ENCODE measurements at regions of chr19 and their contacts with region 1.

Region 1: DNA sequence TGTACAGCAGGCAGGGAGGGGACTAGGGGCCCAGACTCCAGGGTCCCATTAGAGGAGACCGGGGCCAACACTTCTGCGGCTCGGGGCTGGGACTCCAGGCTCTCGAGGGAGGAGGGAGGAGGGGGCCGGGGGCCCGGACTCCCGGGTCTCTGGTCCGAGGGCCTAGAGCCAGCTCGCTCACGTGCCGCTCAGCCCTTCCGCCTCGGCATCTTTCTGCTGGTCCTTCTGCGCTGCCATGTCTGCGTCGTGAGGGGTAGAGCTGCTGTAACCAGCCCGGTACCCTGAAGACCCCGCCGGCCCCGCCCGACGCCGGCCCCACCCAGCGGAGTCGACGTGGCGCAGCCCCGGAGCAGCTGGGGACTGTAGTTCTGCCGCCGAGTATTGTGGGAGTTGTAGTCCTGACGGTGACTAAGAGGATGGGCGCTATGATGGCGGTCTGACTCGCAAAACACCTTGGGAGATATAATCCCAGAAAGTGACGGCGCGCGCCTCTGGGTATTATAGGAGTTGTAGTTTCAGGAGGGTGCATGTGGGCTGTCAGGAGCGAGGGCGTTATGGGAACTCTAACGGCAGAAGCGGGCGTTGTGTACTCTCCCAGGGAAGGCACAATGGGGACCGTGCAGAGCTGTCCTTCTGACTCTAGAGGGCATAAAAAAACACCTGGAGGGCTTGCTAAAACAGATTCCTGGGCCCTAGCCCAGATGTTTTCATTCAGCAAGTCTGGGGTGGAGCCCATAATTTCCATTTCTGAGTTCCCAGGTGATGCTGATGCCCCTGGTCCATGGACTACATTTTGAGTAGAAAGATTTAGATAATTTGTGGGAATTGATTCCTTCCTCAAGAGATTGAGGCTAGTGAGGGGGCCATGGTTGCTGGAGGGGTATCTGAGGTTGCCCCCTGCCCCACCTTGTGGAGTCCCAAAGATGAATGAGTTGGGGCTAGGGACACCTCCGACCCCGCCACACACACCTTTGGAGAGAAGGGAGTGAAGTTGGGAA is at the start of gene RABAC1:
- DNase-seq: peak; percentile 85
- ATAC-seq: peak; percentile 79
- H3K4me3 ChIP-seq: peak within 1 kb of the TSS; percentile 82 to 87
- H3K27ac ChIP-seq: peak within 1 kb of the TSS; percentile 72
- H3K4me1 ChIP-seq: peaks cover 24 to 38% of the 10 kb centered on the region in 2 experiments
- H3K27me3 ChIP-seq: no peaks in the 10 kb centered on the region
- CTCF ChIP-seq: peak in 2 of 3 experiments; percentile 34 to 37; a peak in 2 of 6 replicates
- POLR2A ChIP-seq: peak; percentile 37
- RAD21 ChIP-seq: no peak
- total RNA-seq, gene RABAC1: 66.3 TPM

Region 2: DNA sequence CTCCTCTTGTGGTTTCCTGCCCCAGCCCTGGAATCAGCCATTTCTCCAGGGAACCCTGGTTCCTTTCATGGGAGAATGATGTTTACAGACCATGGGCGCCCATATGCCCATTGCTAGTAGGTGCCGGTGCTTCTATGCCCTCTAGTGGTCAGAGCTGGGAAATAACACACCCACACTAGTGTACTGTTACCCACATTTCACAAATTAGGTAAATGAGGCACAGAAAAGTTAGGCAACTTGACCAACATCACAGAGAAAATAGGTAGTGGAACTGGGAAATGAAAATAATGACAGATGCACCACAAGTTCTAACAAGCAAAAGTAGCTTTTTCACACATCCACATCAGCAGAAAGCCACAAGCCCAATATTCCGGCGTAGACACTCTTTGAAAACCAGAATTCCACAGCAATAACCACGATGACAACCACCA is 164.3 kb before region 1 on chr19:
- CTCF ChIA-PET with region 1: interaction called, 5 read pairs
- POLR2A ChIA-PET with region 1: no interaction called
- RAD21 ChIA-PET with region 1: no interaction called
- intact Hi-C with region 1: loop called (anchors 5 kb)
- DNase-seq: peak; percentile 38
- ATAC-seq: peak; percentile 93
- H3K4me3 ChIP-seq: no peak overlapping the region
- H3K27ac ChIP-seq: no peak overlapping the region
- H3K4me1 ChIP-seq: no peaks in the 10 kb centered on the region; a peak in 1 of 4 replicates
- H3K27me3 ChIP-seq: peaks cover 22% of the 10 kb centered on the region; the same call in 1 of the 2 replicates
- CTCF ChIP-seq: peak; percentile 54 to 89 (median 83)
- POLR2A ChIP-seq: no peak
- RAD21 ChIP-seq: peak; percentile 41

Region 3: DNA sequence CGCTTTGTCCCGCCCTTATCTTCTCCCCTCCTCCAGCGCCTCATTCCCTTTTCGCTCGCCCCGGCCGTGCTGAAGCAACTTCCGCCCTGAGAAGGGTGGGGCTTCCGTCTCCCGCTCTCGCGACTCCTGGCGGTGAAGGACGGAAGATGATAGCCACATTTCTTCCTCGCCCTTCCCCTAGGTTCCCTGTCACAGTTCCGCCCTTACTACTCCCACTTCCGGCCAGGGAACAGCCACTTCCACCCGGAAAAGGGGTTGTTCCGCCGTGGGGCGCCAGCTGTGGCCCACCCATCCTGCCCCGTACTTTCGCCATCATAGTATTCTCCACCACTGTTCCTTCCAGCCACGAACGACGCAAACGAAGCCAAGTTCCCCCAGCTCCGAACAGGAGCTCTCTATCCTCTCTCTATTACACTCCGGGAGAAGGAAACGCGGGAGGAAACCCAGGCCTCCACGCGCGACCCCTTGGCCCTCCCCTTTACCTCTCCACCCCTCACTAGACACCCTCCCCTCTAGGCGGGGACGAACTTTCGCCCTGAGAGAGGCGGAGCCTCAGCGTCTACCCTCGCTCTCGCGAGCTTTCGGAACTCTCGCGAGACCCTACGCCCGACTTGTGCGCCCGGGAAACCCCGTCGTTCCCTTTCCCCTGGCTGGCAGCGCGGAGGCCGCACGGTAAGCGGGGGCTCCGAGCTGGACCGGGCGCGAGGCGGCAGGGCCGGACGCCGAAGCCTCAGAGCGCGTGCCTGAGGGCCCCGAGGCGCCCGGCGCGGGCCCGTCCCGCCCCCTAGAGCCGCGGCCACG is 99.5 kb before region 1 on chr19 and contains the start of gene RPS19:
- CTCF ChIA-PET with region 1: no interaction called
- POLR2A ChIA-PET with region 1: interaction called, 18 read pairs
- RAD21 ChIA-PET with region 1: interaction called in 1 of 2 experiments, 3 read pairs
- intact Hi-C with region 1: no loop called
- DNase-seq: peak; percentile 97
- ATAC-seq: peak; percentile 89
- H3K4me3 ChIP-seq: peak within 1 kb of the TSS; percentile 73 to 100
- H3K27ac ChIP-seq: peak within 1 kb of the TSS; percentile 99
- H3K4me1 ChIP-seq: peaks cover 26 to 47% of the 10 kb centered on the region in 2 experiments
- H3K27me3 ChIP-seq: no peaks in the 10 kb centered on the region
- CTCF ChIP-seq: peak in 2 of 3 experiments; percentile 34 to 62; a peak in 3 of 6 replicates
- POLR2A ChIP-seq: peak; percentile 86
- RAD21 ChIP-seq: no peak
- total RNA-seq, gene RPS19: 3,020 TPM

Region 4: DNA sequence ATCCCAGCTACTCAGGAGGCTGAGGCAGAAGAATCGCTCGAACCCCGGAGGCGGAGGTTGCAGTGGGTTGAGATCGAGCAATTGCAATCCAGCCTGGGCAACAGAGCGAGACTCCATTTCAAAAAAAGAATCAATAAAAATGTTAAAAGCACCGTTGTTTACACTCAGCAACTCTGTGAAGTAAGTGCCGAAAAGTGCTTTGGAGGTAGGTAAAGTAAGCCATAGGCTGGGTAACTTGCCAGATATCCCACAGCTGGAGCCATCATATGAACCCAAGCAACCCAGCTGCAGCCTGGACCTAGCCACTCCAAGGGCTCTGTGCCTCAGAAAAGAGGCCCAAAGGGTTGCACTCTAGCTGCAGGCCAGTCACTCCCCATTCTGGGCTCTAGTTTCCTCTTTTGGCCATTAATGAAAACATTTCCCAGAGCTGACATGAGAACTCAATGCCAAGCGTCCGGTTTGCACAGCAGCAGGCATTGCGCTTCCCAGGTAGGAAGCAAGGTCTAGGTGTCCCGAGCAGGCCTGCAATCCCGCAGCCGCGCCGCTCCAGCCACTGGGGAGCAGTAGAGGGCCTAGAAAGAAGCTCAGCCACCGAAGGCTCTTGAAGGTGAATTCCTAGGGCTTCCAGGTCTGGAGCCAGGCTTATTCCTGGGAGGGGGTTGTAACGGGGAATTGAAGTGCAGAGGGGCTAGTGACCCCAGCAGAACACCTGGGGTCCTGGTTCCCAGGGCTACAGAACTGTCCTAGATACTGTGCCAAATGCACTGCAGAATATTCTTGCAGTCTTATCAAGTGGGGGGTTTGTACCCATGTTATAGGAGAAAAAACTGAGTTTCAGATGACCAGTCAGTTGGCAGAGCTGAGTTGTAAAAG is 86.3 kb before region 1 on chr19:
- CTCF ChIA-PET with region 1: interaction called, 16 read pairs
- POLR2A ChIA-PET with region 1: interaction called, 8 read pairs
- RAD21 ChIA-PET with region 1: interaction called in 1 of 2 experiments, 4 read pairs
- intact Hi-C with region 1: loop called (anchors 1 kb)
- DNase-seq: peak; percentile 63
- ATAC-seq: peak; percentile 83
- H3K4me3 ChIP-seq: no peak overlapping the region
- H3K27ac ChIP-seq: peak overlapping the region; percentile 51
- H3K4me1 ChIP-seq: peaks cover 0 to 27% of the 10 kb centered on the region in 2 experiments; a peak in 2 of 4 replicates
- H3K27me3 ChIP-seq: no peaks in the 10 kb centered on the region
- CTCF ChIP-seq: peak; percentile 86 to 94 (median 88)
- POLR2A ChIP-seq: no peak
- RAD21 ChIP-seq: peak; percentile 89

Region 5: GRCh38 chr19:41883821-41884733 is 75.3 kb before region 1 on chr19:
- CTCF ChIA-PET with region 1: interaction called, 4 read pairs
- POLR2A ChIA-PET with region 1: interaction called, 3 read pairs
- RAD21 ChIA-PET with region 1: no interaction called
- intact Hi-C with region 1: loop called (anchors 2 kb)
- DNase-seq: peak; percentile 94
- ATAC-seq: peak; percentile 86
- H3K4me3 ChIP-seq: peak overlapping the region; percentile 97
- H3K27ac ChIP-seq: peak overlapping the region; percentile 73
- H3K4me1 ChIP-seq: peaks cover 29 to 54% of the 10 kb centered on the region in 2 experiments
- H3K27me3 ChIP-seq: no peaks in the 10 kb centered on the region
- CTCF ChIP-seq: no peak
- POLR2A ChIP-seq: peak; percentile 86
- RAD21 ChIP-seq: no peak

Region 6: DNA sequence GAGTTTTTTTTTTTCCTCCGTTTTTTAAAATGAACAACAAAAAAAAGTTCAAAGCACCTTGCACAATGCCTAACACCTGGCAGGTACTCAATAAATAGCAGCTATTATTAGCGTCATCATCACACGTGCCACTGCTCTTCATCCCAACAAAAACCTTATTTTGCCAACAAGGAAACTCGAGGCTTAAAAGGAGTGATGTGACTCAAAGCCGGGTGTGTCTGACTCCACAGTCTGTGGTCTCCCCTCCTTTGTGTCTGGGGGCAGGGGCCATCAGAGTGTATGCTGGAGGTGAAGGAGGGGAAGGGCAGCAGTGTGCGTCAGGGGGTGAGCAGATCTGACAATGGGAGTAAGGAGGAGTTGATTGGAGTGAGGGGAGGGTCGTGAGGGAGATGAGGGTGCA is 207.0 kb after region 1 on chr19:
- CTCF ChIA-PET with region 1: no interaction called
- POLR2A ChIA-PET with region 1: no interaction called
- RAD21 ChIA-PET with region 1: no interaction called
- intact Hi-C with region 1: no loop called
- DNase-seq: no peak
- ATAC-seq: no peak
- H3K4me3 ChIP-seq: no peak overlapping the region
- H3K27ac ChIP-seq: no peak overlapping the region
- H3K4me1 ChIP-seq: 0 out of 4 replicates have a peak, but pooled peaks cover 0 to 3% of the 10 kb centered on the region in 2 experiments
- H3K27me3 ChIP-seq: peaks cover 12% of the 10 kb centered on the region; the same call in 1 of the 2 replicates
- CTCF ChIP-seq: no peak
- POLR2A ChIP-seq: no peak
- RAD21 ChIP-seq: no peak